AG04450 (cell line): ENCODE measurements at regions of chr19 and their contacts with region 1.

Region 1: DNA sequence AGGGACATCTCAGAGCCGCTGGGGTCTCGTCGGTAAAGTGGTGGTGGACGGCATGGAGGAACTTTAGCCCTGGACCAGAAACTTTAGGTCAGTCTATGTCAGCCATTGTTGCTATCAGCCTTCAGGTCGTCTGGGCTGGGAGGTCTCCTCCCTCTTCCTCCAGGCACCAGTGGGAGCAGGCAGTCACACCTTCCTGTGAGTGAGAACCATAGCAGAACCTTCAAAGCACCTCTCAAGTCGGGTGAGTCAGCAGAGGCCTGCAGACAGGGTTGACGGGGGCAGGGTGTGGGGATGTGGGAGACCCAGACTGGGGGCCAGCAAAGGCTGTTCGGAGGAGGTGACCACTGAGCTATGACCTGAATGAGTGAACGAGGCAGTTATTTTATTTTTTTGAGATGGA is 15.4 kb upstream of the SBNO2 start:
- DNase-seq: no peak
- H3K4me3 ChIP-seq: no peak overlapping the region
- H3K27ac ChIP-seq: no peak overlapping the region
- H3K27me3 ChIP-seq: no peaks in the 10 kb centered on the region
- CTCF ChIP-seq: no peak

Region 2: GRCh38 chr19:1113033-1113985 is 76.1 kb before region 1 on chr19:
- CTCF ChIA-PET with region 1: interaction called, 52 read pairs
- POLR2A ChIA-PET with region 1: interaction called, 7 read pairs
- DNase-seq: peak; percentile 94
- H3K4me3 ChIP-seq: no peak overlapping the region
- H3K27ac ChIP-seq: peak overlapping the region; percentile 88
- H3K27me3 ChIP-seq: no peaks in the 10 kb centered on the region
- CTCF ChIP-seq: peak; percentile 83

Region 3: GRCh38 chr19:1123381-1123780 is 66.0 kb before region 1 on chr19:
- CTCF ChIA-PET with region 1: no interaction called
- POLR2A ChIA-PET with region 1: no interaction called
- DNase-seq: no peak
- H3K4me3 ChIP-seq: no peak overlapping the region
- H3K27ac ChIP-seq: no peak overlapping the region
- H3K27me3 ChIP-seq: no peaks in the 10 kb centered on the region
- CTCF ChIP-seq: no peak

Region 4: DNA sequence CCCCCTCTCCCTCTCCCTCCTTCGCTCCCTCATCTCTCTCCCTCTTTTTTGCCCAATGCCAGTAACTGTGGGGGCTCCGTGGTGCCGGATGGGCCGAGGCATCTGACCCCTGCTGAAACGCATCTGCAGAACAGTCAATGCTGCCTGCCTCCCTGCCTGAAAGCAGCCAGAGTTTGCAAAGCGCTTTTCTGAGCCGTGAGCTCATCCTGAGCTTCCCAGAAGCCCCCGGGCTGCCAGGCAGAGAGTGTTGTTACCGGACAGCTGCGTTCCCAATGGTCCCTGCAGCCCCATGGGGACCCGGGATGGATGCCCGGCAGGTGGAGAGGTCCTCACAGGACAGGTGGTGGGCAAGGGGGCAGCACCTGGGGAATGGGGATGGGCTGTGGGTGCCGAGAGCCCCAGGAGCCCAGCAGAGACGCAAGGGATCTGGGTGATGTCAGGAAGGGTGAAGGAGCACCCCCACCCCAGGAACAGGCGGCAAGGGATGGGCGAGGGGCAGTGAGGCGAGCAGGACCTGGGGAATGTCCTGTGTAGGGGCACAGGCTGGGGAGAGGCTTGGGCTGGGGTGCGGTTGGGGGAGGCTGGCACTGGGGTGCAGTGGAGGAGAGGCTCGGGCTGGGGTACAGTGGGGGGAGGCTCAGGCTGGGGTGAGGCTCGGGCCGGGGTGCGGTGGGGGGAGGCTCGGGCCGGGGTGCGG is 52.6 kb before region 1 on chr19:
- CTCF ChIA-PET with region 1: no interaction called
- POLR2A ChIA-PET with region 1: no interaction called
- DNase-seq: no peak
- H3K4me3 ChIP-seq: no peak overlapping the region
- H3K27ac ChIP-seq: no peak overlapping the region
- H3K27me3 ChIP-seq: no peaks in the 10 kb centered on the region
- CTCF ChIP-seq: no peak

Region 5: DNA sequence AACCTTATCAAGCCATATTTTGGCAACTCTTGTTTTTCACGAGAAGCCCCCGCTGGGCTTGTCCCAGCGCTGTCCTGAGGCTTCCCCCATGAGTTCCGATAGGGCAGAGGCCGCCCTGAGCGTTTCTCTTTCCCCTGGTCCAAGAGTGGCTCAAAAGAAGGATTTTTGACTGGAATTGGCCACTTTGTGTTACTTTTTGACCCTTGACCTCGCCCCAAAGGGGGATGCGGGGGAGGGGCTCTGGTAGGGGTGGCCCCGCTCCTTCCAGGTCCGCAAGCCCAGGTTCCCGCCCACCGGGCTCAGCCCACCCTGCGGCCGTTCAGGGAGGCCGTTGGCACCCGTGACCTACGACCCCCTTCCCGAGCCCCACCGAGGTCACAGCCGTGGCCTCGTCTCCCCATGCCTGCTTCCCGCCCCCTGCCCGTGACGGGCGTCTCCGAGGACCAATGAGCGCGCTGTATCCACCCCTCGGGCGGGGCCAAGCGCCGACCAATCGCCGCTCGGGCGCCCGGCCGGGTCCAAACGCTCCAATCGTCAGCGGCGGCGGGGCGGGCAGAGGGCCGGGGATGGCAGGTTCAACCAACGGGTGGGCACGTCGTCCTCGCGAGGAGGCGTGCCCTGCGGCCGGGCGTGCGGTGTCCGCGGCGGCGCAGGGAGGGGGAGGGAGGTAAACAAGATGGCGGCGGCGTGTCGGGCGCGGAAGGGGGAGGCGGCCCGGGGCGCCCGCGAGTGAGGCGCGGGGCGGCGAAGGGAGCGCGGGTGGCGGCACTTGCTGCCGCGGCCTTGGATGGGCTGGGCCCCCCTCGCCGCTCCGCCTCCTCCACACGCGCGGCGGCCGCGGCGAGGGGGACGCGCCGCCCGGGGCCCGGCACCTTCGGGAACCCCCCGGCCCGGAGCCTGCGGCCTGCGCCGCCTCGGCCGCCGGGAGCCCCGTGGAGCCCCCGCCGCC is 16.0 kb after region 1 on chr19 and contains the start of gene STK11:
- CTCF ChIA-PET with region 1: interaction called, 19 read pairs
- POLR2A ChIA-PET with region 1: interaction called, 3 read pairs
- DNase-seq: peak; percentile 90
- H3K4me3 ChIP-seq: peak within 1 kb of the TSS; percentile 76
- H3K27ac ChIP-seq: peak within 1 kb of the TSS; percentile 57
- H3K27me3 ChIP-seq: no peaks in the 10 kb centered on the region
- CTCF ChIP-seq: no peak
- polyA plus RNA-seq, gene STK11: 24.6 and 26.6 TPM in 2 replicates